ENCODE measurements at regions of chr5 and their contacts with region 1.

Region 1: GRCh38 chr5:149852641-149853330 is 91.8 kb downstream of the PDE6A start:
- DNase-seq: peak; percentile 75

Region 2: DNA sequence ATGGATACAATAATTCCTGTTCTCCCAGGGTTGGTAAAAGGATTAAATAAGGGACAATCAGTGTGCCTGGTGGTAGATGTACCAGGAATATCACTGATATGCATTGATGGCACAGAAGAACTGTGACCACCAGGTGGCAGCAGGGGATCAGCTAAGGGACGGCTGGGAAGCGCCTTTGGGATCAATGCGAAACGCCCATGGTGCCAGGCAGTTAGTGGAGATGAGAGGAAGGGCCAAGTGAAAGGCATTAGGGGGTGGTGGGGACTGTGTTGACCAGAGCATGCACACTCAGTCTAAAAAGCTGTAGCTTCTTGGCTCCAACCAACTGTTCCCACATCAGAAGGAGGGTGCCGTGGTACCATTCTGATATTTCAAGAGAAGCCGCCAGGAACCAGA is 215.9 kb before region 1 on chr5:
- CTCF ChIA-PET with region 1: interaction called, 12 read pairs
- POLR2A ChIA-PET with region 1: no interaction called
- DNase-seq: peak; percentile 76

Region 3: DNA sequence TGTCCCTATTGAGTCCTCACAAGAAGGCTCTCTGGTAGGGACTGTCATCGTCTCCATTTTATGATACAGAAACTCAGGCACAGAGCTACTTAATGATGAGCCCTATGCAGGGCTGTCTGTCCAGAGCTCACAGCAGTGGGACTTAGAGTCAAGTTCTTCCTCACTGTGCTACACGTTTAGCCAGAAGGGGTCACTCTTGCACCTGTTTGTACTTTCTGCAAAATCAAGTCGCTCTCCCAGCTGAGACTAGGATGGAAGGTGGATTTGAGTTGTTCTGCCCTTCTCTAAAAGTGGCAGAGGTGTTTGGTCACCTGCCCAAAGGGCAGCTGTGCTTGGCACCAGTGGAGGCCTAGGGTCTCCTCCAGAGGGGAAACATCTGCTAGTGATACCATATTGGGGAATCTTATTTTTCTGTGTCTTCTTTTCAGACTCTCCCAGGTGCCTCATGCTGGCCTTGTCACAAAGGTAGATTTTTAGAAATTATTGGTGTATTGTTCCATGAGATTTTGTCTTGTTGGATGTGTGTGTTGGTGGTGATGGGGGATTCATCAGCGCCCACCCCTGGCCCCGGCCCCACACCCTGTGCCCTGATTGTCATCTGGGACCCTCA is 18.4 kb before region 1 on chr5:
- CTCF ChIA-PET with region 1: interaction called, 14 read pairs
- POLR2A ChIA-PET with region 1: no interaction called
- DNase-seq: peak; percentile 73

Region 4: DNA sequence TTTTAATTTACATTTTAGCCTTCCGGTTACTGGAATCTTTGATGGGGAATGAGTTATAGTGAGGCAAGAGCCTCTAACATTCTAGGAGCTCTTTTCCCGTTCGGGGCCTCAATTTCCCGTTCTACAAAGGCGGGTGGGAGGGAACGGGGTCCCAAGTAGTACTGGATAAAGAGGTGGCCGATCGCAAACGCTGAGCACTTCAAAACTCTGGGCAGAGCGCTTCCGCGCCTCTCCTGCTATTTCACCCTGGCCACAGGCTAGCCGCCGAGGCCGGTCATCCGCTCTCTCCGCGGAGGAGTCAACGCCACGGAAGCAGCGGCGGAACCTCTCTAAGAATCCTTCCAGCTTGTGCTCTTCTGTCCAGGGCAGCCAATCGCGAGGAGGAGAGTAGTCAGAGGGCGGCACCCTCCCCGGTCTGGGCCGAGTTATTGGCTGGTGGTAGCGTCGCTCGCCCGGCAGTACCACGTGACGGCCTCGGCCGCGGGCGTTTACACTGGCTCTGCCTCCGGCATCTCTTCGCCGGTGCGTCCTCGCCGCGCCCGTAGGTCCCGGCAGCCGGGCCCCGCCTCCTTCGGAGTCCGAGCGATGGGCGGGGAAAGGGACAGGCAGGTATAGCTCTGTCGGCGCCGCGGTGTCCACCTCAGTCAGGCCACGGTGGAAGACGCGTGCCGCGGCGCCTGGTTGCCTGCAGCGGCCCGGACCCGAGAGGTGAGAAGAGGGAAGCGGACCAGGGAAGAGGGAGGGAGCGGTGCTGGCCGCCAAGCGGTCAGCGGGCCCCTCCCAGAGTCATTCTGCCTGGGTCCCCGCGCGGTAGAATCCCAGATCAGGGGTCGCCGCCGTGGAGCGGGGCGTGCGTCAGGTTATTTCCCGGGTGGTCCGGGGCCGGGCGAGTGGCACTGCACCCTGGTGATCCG is 107.7 kb after region 1 on chr5 and contains the start of gene SLC26A2:
- CTCF ChIA-PET with region 1: interaction called, 40 read pairs
- POLR2A ChIA-PET with region 1: interaction called, 5 read pairs
- DNase-seq: peak; percentile 95

Region 5: DNA sequence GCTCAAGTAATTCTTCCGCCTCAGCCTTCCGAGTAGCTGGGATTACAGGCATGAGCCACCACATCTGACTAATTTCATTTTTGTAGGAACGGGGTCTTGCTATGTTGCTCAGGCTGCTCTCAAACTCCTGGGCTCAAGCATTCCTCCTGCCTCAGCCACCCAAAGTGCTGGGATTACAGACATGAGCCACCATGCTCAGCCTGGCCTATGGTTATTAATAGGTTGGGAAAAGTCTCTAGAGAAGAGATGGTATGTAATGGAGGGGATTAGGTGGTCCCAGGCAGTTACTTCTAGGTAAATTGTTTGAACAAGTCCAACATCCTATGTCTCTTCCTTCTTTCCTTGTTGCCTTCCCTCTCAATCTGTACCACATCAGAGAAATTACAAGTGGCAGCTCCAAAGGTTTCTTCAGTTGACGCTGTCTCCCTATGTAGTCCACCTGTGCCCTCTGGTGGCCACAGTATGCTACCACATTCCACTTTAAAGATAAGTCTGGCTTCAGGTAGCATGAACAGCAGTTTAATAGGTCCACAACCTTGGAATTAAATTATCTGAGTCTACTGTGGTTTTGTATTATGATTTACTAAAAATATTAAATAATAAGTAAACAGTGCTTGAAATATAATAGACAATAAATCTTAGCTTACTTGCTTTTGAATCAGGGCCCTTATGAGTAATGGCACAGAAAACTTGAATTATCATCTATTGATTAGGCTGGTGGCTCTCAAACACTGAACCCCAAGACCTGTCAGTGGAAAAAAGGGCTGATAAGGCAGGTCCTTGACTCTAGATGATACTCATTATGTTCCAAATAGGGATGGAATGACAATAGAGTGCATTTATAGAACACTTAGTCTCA is 138.0 kb after region 1 on chr5:
- CTCF ChIA-PET with region 1: interaction called, 10 read pairs
- POLR2A ChIA-PET with region 1: no interaction called
- DNase-seq: peak; percentile 69